HCT116 (cell line): ENCODE measurements at regions of chr3 and their contacts with region 1.

Region 1: GRCh38 chr3:102229062-102229655 is 205.7 kb upstream of the ZPLD1 start:
- DNase-seq: peak; percentile 78
- ATAC-seq: peak; percentile 87
- H3K4me3 ChIP-seq: no peak overlapping the region
- H3K27ac ChIP-seq: no peak overlapping the region
- H3K4me1 ChIP-seq: peaks cover 0 to 6% of the 10 kb centered on the region in 2 experiments; a peak in 1 of 4 replicates
- H3K27me3 ChIP-seq: no peaks in the 10 kb centered on the region
- CTCF ChIP-seq: peak; percentile 83 to 92 (median 86); a peak in 5 of 6 replicates
- POLR2A ChIP-seq: no peak
- RAD21 ChIP-seq: peak; percentile 96

Region 2: DNA sequence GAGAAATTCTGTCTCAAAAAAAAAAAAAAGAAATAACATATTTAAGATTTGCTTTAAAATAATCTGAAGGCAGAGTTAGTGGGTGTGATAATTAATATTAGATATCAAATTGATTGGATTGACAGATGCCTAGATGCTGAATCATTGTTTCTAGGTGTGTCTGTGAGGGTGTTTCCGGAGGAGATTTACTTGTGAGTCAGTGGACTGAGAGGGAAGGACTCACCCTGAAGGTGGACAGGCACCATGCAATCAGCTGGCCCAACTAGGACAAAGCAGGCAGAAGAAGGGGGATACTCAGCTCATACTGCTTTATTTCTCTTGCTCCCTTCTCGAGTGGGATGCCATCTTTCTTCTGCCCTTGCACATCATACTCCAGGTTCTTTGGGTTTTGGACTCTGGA is 526.0 kb before region 1 on chr3:
- CTCF ChIA-PET with region 1: no interaction called
- POLR2A ChIA-PET with region 1: no interaction called
- RAD21 ChIA-PET with region 1: no interaction called
- intact Hi-C with region 1: no loop called
- DNase-seq: peak; percentile 52
- ATAC-seq: peak; percentile 73
- H3K4me3 ChIP-seq: peak overlapping the region; percentile 6 to 27; a peak in 2 of 4 replicates
- H3K27ac ChIP-seq: no peak overlapping the region
- H3K4me1 ChIP-seq: peaks cover 7 to 27% of the 10 kb centered on the region in 2 experiments
- H3K27me3 ChIP-seq: no peaks in the 10 kb centered on the region
- CTCF ChIP-seq: no peak
- POLR2A ChIP-seq: no peak
- RAD21 ChIP-seq: no peak

Region 3: DNA sequence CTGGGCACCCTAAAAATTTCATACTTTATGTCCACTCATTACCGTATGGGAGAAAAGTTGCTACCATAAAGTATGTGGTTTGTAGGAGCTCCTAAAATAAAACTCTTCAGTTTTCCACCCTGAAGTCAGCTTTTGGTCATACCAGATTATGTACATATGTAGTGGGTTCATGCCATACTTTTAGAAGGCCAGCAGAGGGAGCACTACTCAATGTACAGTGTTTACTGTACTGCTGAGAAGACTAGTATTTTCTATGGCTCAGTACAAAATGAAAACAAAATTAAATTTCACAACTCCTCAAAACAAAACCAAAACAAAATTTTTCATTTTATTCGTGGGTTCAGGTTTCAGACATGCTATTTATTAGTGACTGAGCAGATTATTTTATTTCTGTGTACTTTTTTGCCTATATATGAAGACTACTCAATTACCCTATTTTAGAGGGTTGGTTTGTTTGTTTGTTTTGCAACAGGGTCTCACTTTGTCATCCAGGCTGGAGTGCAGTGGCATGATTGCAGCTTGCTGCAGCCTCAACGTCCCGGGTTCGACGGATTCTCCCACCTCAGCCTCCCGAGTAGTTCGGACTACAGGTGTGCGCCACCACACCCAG is 425.9 kb before region 1 on chr3:
- CTCF ChIA-PET with region 1: interaction called, 121 read pairs
- POLR2A ChIA-PET with region 1: no interaction called
- RAD21 ChIA-PET with region 1: interaction called, 10 to 12 read pairs
- intact Hi-C with region 1: no loop called
- DNase-seq: peak; percentile 43
- ATAC-seq: peak; percentile 96
- H3K4me3 ChIP-seq: no peak overlapping the region
- H3K27ac ChIP-seq: no peak overlapping the region
- H3K4me1 ChIP-seq: no peaks in the 10 kb centered on the region
- H3K27me3 ChIP-seq: no peaks in the 10 kb centered on the region
- CTCF ChIP-seq: peak; percentile 53 to 88 (median 81); a peak in 5 of 6 replicates
- POLR2A ChIP-seq: no peak
- RAD21 ChIP-seq: peak; percentile 49

Region 4: DNA sequence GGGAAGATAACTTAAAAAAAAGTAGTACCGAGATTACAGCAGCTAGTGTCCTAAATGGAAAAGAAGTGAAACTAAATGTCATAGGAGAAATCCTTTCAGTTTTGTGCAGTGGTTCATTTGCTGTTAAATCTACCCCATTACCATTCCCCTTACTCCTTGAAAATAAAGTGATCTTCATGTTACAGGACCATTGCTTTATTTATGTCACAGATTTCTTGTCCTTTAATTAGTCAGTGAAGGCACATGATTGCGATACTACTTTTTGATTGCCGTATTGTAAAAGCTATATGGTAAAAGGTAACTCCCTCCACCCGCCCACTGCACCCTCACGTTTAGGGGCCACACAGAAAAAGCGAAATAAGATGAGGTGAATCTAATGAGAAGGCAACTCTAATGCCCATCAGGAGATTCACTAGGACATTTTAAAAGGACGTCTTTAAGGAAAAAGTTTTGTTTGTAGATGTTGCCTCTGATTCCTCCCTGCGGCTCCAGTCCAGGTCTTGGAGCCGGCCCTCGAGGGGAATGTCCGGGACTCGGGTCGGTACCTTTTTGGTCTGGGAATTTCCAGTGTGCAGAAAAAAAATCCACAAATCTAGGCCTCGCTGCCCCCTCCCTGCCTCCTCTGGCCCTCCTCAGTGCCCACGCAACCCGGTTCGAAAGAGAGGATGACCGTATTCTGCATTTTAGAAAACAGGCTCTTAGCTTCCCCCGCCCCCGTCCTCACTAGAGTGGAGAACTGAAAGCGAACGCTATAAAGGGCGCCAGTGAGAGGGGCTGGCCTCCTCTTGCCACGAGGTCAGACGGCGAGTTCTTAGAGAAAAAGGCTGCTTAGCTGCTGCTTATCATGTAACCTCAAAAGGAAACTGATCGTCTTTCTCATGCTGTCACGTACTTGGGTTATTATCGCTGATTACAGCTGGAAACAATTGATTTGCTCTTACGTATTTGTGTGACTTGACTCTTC is 401.7 kb before region 1 on chr3:
- CTCF ChIA-PET with region 1: interaction called, 16 read pairs
- POLR2A ChIA-PET with region 1: interaction called, 3 read pairs
- RAD21 ChIA-PET with region 1: no interaction called
- intact Hi-C with region 1: no loop called
- DNase-seq: peak; percentile 52
- ATAC-seq: peak; percentile 82
- H3K4me3 ChIP-seq: peak overlapping the region; percentile 56 to 67
- H3K27ac ChIP-seq: peak overlapping the region; percentile 74
- H3K4me1 ChIP-seq: peaks cover 12 to 19% of the 10 kb centered on the region in 2 experiments
- H3K27me3 ChIP-seq: no peaks in the 10 kb centered on the region
- CTCF ChIP-seq: no peak
- POLR2A ChIP-seq: no peak
- RAD21 ChIP-seq: no peak

Region 5: DNA sequence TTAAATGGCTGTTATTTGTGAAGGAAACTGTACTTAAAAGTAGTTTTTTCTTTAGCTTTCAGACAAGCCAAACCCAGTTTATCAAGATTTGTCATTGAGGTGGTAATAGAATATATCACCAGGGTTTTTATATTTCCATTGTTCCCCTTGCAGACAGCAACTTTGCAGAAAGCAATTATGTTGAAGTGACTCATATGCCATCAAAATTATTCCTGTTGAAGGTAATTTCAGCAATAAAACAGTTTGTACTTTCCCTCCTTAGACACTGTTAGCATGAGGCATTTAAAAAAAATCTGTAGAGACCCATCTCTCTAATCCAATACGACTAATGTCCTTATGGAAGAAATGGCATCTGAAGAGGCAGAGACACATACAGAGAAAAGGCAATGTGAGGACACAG is 160.8 kb before region 1 on chr3:
- CTCF ChIA-PET with region 1: no interaction called
- POLR2A ChIA-PET with region 1: no interaction called
- RAD21 ChIA-PET with region 1: no interaction called
- intact Hi-C with region 1: no loop called
- DNase-seq: no peak
- ATAC-seq: no peak
- H3K4me3 ChIP-seq: no peak overlapping the region
- H3K27ac ChIP-seq: no peak overlapping the region
- H3K4me1 ChIP-seq: no peaks in the 10 kb centered on the region
- H3K27me3 ChIP-seq: no peaks in the 10 kb centered on the region
- CTCF ChIP-seq: no peak
- POLR2A ChIP-seq: no peak
- RAD21 ChIP-seq: no peak

Region 6: DNA sequence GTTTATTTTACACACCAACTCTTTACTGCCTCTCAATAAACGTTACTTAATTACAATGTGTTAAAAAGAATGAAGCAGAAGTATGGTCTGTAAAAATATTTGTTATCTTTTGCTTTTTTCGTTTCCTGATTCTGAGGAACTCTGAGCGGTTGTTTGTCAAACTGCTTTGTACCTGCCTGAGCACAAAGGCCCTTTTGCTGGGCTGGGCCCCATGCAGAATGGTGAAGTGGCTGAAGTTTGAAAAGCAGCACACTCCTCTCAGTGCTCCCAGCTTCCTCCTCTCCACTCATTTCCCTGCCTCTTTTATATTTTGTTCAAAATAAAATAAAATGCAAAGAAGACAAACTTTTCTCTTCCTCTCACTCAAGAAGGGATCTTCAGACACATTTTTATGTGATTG is 150.3 kb before region 1 on chr3:
- CTCF ChIA-PET with region 1: no interaction called
- POLR2A ChIA-PET with region 1: no interaction called
- RAD21 ChIA-PET with region 1: no interaction called
- intact Hi-C with region 1: no loop called
- DNase-seq: no peak
- ATAC-seq: no peak
- H3K4me3 ChIP-seq: no peak overlapping the region
- H3K27ac ChIP-seq: no peak overlapping the region
- H3K4me1 ChIP-seq: no peaks in the 10 kb centered on the region
- H3K27me3 ChIP-seq: no peaks in the 10 kb centered on the region
- CTCF ChIP-seq: no peak
- POLR2A ChIP-seq: no peak
- RAD21 ChIP-seq: no peak

Region 7: GRCh38 chr3:102206511-102207031 is 22.6 kb before region 1 on chr3:
- CTCF ChIA-PET with region 1: no interaction called
- POLR2A ChIA-PET with region 1: no interaction called
- RAD21 ChIA-PET with region 1: no interaction called
- intact Hi-C with region 1: no loop called
- DNase-seq: no peak
- ATAC-seq: no peak
- H3K4me3 ChIP-seq: no peak overlapping the region
- H3K27ac ChIP-seq: no peak overlapping the region
- H3K4me1 ChIP-seq: no peaks in the 10 kb centered on the region
- H3K27me3 ChIP-seq: no peaks in the 10 kb centered on the region
- CTCF ChIP-seq: no peak
- POLR2A ChIP-seq: no peak
- RAD21 ChIP-seq: no peak

Region 8: GRCh38 chr3:102536456-102536855 is 307.3 kb after region 1 on chr3:
- CTCF ChIA-PET with region 1: interaction called, 140 read pairs
- POLR2A ChIA-PET with region 1: interaction called, 6 read pairs
- RAD21 ChIA-PET with region 1: interaction called, 16 to 30 read pairs
- intact Hi-C with region 1: loop called (anchors 1 kb)
- DNase-seq: peak; percentile 26
- ATAC-seq: peak; percentile 84
- H3K4me3 ChIP-seq: no peak overlapping the region
- H3K27ac ChIP-seq: no peak overlapping the region
- H3K4me1 ChIP-seq: no peaks in the 10 kb centered on the region
- H3K27me3 ChIP-seq: no peaks in the 10 kb centered on the region
- CTCF ChIP-seq: peak; percentile 34 to 63 (median 58); a peak in 5 of 6 replicates
- POLR2A ChIP-seq: no peak
- RAD21 ChIP-seq: peak; percentile 76

Region 9: GRCh38 chr3:102741108-102741507 is 511.9 kb after region 1 on chr3:
- CTCF ChIA-PET with region 1: interaction called, 24 read pairs
- POLR2A ChIA-PET with region 1: no interaction called
- RAD21 ChIA-PET with region 1: interaction called, 3 to 4 read pairs
- intact Hi-C with region 1: loop called (anchors 1 kb)
- DNase-seq: peak; percentile 8
- ATAC-seq: peak; percentile 80
- H3K4me3 ChIP-seq: no peak overlapping the region
- H3K27ac ChIP-seq: no peak overlapping the region
- H3K4me1 ChIP-seq: no peaks in the 10 kb centered on the region
- H3K27me3 ChIP-seq: no peaks in the 10 kb centered on the region
- CTCF ChIP-seq: peak; percentile 38 to 51 (median 46); a peak in 4 of 6 replicates
- POLR2A ChIP-seq: no peak
- RAD21 ChIP-seq: peak; percentile 63